ENCODE measurements at regions of chr5 and their contacts with region 1.

Region 1: DNA sequence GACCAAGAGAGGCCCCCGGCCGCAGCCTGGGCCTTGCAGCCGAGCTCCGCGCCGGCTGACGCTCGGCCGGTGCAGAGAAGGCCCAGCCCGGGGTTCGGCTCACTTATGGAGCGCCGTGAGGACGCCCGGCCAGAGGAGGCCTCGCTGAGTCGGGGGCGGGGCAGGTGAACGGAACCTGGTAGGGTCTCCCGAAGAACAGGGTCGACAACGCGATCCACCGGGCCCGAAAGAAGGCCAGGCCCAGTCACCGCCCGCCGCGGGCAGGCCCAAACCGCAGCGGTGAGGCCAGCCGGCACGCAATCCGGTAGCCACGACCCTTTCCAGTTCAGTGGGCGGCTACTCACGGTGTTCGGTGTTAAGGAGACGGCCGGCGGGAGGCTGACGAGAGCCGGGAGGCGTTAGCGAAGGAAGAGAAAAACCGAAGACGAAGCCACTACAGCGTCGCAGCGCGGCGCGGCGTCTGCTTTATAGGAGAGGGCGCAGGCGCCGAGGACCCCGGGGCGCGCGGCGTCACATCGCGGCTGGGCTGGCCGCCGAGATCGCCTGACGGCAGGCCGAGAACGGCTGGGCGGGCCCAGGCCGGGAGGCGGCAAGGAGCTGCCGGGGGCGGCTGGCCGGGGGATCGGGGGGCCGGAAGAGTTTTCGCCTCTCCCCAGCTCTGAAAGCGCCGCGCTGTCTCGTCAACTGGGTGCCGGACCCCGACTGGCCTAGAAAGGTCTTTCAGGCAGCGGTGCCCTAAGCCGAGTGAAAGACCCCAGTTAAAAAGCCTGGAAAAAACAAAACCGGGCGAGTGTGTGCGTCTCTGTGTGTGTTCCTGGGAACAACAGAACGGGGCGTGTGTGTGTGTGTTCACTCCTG is at the start of gene SKP1:
- DNase-seq: peak; percentile 83
- H3K4me3 Mint-ChIP-seq: peak within 1 kb of the TSS; percentile 96
- H3K27ac Mint-ChIP-seq: peak within 1 kb of the TSS; percentile 94
- H3K4me1 Mint-ChIP-seq: peaks cover 31% of the 10 kb centered on the region
- H3K27me3 Mint-ChIP-seq: no peaks in the 10 kb centered on the region
- total RNA-seq, gene SKP1: 307 to 309 TPM

Region 2: GRCh38 chr5:134107779-134108178 is 69.0 kb before region 1 on chr5:
- CTCF ChIA-PET with region 1: no interaction called
- intact Hi-C with region 1: no loop called
- DNase-seq: no peak
- H3K4me3 Mint-ChIP-seq: no peak overlapping the region
- H3K27ac Mint-ChIP-seq: peak overlapping the region; percentile 62
- H3K4me1 Mint-ChIP-seq: peaks cover 86% of the 10 kb centered on the region
- H3K27me3 Mint-ChIP-seq: no peaks in the 10 kb centered on the region

Region 3: GRCh38 chr5:134153657-134154056 is 23.1 kb before region 1 on chr5:
- CTCF ChIA-PET with region 1: interaction called, 3 read pairs
- intact Hi-C with region 1: loop called (anchors 2 kb)
- DNase-seq: no peak
- H3K4me3 Mint-ChIP-seq: no peak overlapping the region
- H3K27ac Mint-ChIP-seq: peak overlapping the region; percentile 80
- H3K4me1 Mint-ChIP-seq: peaks cover 78% of the 10 kb centered on the region
- H3K27me3 Mint-ChIP-seq: no peaks in the 10 kb centered on the region

Region 4: GRCh38 chr5:134161513-134162395 is 15.0 kb before region 1 on chr5:
- CTCF ChIA-PET with region 1: interaction called, 5 read pairs
- intact Hi-C with region 1: loop called (anchors 2 kb)
- DNase-seq: no peak
- H3K4me3 Mint-ChIP-seq: no peak overlapping the region
- H3K27ac Mint-ChIP-seq: peak overlapping the region; percentile 50
- H3K4me1 Mint-ChIP-seq: peaks cover 58% of the 10 kb centered on the region
- H3K27me3 Mint-ChIP-seq: no peaks in the 10 kb centered on the region

Region 5: GRCh38 chr5:134769206-134769605 is 592.5 kb after region 1 on chr5:
- CTCF ChIA-PET with region 1: no interaction called
- intact Hi-C with region 1: no loop called
- DNase-seq: no peak
- H3K4me3 Mint-ChIP-seq: no peak overlapping the region
- H3K27ac Mint-ChIP-seq: no peak overlapping the region
- H3K4me1 Mint-ChIP-seq: no peaks in the 10 kb centered on the region
- H3K27me3 Mint-ChIP-seq: no peaks in the 10 kb centered on the region

Measured in activated naive CD4-positive, alpha-beta T cell treated with anti-CD3 and anti-CD28 coated beads for 36 hours (primary cell).